Psoas muscle (tissue), 8 donors: ENCODE measurements at regions of chr6 and their contacts with region 1.

Region 1: GRCh38 chr6:43013843-43014433 is at the starts of genes KLHDC3 and MEA1:
- DNase-seq: peak; percentile 99
- ATAC-seq: peak; percentile 91 to 97 (median 94)
- H3K4me3 ChIP-seq: peak within 1 kb of the TSS; percentile 77
- H3K27ac ChIP-seq: peak within 1 kb of the TSS; percentile 87
- H3K4me1 ChIP-seq: peaks cover 51% of the 10 kb centered on the region
- H3K27me3 ChIP-seq: no peaks in the 10 kb centered on the region
- CTCF ChIP-seq: no peak
- total RNA-seq, gene KLHDC3: 75.2 to 115 (median 99.1) TPM
- total RNA-seq, gene MEA1: 20.3 to 27.5 (median 26.9) TPM

Region 2: DNA sequence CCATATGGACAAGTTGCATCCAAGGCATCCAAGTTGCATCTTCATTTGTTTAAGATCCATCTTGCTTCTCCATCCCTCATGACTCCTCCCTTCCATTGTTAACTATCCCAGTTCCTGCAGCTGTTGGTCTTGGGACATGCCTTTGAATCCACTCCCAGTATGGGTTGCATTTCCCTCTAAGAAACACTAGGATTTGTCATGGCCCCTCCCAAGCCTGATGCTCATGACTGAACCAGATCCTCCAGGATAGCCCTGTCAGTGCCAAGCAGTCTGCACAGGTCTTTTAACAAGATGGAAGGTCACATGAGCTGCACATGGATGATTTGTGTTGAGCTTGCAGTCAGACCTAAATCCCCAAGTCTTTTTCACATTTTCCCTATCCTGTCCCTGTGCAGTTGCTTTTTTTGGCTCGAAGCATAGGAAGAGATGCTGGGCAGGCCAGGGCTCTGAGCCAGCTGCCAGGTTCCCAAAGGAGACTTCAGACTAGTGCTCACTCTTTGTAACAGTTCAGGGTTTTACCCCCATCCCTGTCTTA is 25.4 kb before region 1 on chr6:
- intact Hi-C with region 1: loop called in 1 of 2 experiments (anchors 2 kb)
- DNase-seq: no peak
- ATAC-seq: no peak
- H3K4me3 ChIP-seq: no peak overlapping the region
- H3K27ac ChIP-seq: no peak overlapping the region
- H3K4me1 ChIP-seq: peaks cover 33% of the 10 kb centered on the region
- H3K27me3 ChIP-seq: no peaks in the 10 kb centered on the region
- CTCF ChIP-seq: no peak

Region 3: GRCh38 chr6:43053545-43054205 is 39.7 kb after region 1 on chr6 and contains the start of gene CUL7:
- intact Hi-C with region 1: loop called (anchors 2 to 5 kb)
- DNase-seq: peak; percentile 92 to 96
- ATAC-seq: peak; percentile 94 to 96 (median 94)
- H3K4me3 ChIP-seq: peak within 1 kb of the TSS; percentile 80
- H3K27ac ChIP-seq: peak within 1 kb of the TSS; percentile 90
- H3K4me1 ChIP-seq: peaks cover 17% of the 10 kb centered on the region
- H3K27me3 ChIP-seq: no peaks in the 10 kb centered on the region
- CTCF ChIP-seq: no peak
- total RNA-seq, gene CUL7: 9.3 to 23.4 (median 20.1) TPM

Region 4: DNA sequence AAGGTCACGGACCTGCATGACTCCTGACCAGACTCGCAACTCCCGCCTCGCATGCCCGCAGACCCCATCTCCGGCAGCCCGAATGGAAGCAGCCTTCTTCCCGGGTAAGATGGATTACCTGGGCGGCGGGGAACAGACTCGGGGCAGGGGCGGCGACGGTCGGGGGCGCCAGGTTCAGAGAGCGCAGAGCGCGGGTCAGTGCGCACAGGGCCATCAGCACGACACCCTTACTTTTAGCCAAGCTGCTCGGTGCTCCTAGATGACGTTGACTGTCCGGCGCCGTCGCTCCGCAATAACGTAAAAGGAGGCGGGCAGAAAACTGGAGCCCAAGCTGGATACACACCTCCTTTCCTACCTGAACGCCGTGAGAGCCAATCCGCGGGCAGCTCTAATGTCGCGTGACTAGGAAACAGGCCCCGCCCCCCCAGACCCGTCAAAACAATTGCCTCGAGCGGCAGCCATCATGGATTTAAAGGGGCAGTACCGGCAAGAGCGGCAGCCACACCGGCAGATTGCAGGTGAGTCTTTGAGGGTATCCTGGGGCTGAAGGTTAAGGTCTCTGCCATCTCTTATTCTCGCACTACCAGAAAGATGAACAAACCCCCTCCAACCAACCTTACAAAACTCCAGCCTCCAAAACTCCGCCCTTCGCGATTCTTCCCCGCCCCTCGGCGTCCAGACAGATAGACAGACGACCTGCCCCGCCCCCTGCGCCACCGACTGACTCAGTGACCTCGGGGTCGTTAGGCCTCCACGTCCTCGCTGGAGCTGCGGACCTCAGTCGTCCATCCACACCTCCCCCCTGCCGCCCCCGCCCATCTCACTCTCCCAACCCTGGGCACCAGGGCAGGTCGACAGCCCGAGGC is 45.5 kb after region 1 on chr6 and contains the starts of genes KLC4 and MRPL2:
- intact Hi-C with region 1: loop called in 1 of 2 experiments (anchors 2 kb)
- DNase-seq: peak; percentile 98 to 99
- ATAC-seq: peak; percentile 96 to 99 (median 96)
- H3K4me3 ChIP-seq: peak within 1 kb of the TSS; percentile 85
- H3K27ac ChIP-seq: peak within 1 kb of the TSS; percentile 92
- H3K4me1 ChIP-seq: peaks cover 20% of the 10 kb centered on the region
- H3K27me3 ChIP-seq: no peaks in the 10 kb centered on the region
- CTCF ChIP-seq: no peak
- total RNA-seq, gene KLC4: 13.0 to 20.9 (median 15.0) TPM
- total RNA-seq, gene MRPL2: 61.3 to 138 (median 94.5) TPM

Region 5: DNA sequence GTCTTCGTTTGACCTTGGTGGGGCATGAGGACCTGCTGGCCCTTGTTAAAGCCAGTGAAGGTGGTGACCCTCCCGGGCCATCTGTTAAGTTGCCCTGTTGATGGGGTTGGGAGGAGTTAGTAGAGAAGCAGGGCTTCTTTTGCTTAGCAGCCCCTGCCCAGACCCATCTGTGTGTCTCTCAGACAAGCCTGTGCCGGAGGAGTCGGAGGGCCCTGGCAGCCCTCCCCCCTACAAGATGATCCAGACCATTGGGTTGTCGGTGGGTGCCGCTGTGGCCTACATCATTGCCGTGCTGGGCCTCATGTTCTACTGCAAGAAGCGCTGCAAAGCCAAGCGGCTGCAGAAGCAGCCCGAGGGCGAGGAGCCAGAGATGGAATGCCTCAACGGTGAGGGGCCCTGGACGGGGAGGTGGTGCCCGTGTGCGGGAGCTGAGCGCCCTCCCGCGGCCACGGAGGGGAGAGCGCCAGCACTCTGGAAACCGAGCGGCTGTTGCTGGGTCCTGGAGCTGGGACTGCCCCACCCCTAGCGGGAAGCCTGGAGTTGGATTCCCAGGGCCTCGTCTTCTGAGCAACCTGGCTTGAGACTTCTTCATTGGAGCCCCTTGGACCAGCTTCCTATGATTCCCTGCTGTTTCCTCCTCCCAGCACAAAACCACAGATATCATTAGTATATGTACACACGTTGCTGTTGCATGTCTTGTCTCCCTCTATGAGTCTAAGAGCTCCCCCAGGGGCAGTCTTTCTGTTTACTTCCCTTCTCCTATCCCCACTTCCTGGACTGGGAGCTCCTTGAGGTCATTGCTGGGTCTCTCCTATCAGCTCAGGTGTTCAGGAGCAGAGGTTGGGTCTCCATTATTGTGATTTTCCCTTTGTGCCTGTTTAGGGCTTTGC is 129.5 kb after region 1 on chr6:
- intact Hi-C with region 1: loop called (anchors 1 to 2 kb)
- DNase-seq: peak; percentile 86 to 93
- ATAC-seq: peak; percentile 92 to 96 (median 94)
- H3K4me3 ChIP-seq: peak overlapping the region; percentile 10
- H3K27ac ChIP-seq: peak overlapping the region; percentile 13
- H3K4me1 ChIP-seq: peaks cover 21% of the 10 kb centered on the region
- H3K27me3 ChIP-seq: no peaks in the 10 kb centered on the region
- CTCF ChIP-seq: peak; percentile 95